H1 (cell line): ENCODE measurements at regions of chr17 and their contacts with region 1.

Region 1: GRCh38 chr17:51120739-51121617 is at the start of gene SPAG9:
- DNase-seq: peak; percentile 74 to 92
- H3K4me3 ChIP-seq: peak within 1 kb of the TSS; percentile 89 to 100 (median 96)
- H3K27ac ChIP-seq: peak within 1 kb of the TSS; percentile 98
- H3K4me1 ChIP-seq: peaks cover 0 to 5% (median 4%) of the 10 kb centered on the region in 4 experiments; a peak in 4 of 7 replicates
- H3K27me3 ChIP-seq: no peaks in the 10 kb centered on the region
- CTCF ChIP-seq: no peak
- EP300 ChIP-seq: no peak
- POLR2A ChIP-seq: peak; percentile 43 to 63; a peak in 2 of 3 replicates
- RAD21 ChIP-seq: no peak
- total RNA-seq, gene SPAG9: 46.0 and 63.8 TPM in 2 replicates

Region 2: DNA sequence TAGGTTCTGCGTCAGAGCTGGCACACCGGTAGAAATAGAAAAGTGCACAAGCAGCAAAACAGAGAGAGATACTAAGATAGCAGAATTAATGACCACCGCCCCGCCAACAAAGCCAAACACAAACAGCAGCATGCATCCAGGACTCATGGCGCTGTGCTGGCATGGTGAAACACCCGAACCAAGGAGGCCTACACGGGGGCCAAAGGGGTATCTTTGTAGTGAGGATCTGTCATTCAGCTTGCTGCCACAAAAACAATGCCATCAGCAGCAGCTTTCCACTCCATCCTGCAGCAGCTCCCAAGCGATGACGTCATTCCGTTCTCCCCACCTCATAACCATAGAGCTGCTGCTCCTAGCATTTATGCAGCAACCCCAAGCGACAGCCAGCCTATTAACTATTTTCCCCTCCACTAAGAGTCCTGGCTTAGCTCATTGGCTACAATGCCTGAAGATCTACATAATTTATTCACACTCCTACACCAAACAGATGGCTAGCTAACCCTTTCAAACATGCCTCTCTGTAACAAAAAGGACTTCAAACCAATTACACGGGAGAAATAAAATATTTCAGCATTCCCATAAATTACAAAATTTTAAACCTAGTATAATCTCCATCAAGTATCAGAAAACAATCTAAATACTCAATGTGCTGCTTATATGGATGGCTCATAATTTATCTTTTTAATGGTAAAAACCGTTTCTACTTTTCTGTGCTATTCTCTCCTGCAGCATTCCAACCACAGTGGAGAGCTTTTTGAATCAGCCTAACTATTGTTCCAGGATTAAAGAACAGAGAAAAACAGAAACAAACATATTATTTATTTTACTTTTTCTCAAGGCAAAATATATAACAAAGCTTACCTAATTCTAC is 74.2 kb before region 1 on chr17:
- CTCF ChIA-PET with region 1: no interaction called
- POLR2A ChIA-PET with region 1: interaction called, 13 read pairs
- DNase-seq: peak; percentile 53 to 75
- H3K4me3 ChIP-seq: peak overlapping the region; percentile 32 to 61 (median 38); a peak in 7 of 8 replicates
- H3K27ac ChIP-seq: peak overlapping the region; percentile 84
- H3K4me1 ChIP-seq: peaks cover 1 to 14% (median 5%) of the 10 kb centered on the region in 4 experiments; a peak in 5 of 7 replicates
- H3K27me3 ChIP-seq: no peaks in the 10 kb centered on the region
- CTCF ChIP-seq: no peak
- EP300 ChIP-seq: no peak
- POLR2A ChIP-seq: peak; percentile 80 to 82
- RAD21 ChIP-seq: no peak

Region 3: DNA sequence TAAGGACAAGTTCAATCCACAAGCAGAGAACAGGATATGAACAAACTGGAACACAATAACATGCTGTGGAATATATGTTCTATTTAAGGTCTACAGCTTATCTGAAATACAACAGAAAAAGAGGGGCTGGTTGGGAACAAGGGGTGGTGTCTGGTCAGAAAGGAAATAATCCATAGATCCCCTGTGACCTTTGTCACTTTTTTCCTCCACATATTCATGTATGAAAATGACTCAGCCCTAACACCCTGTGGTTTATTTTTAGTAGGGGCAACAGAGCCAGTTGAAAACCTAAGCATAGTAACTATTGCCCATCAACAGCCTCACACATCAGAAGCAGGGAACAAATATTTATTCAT is 12.0 kb after region 1 on chr17:
- CTCF ChIA-PET with region 1: interaction called, 3 read pairs
- POLR2A ChIA-PET with region 1: interaction called, 10 read pairs
- DNase-seq: no peak
- H3K4me3 ChIP-seq: no peak overlapping the region
- H3K27ac ChIP-seq: no peak overlapping the region
- H3K4me1 ChIP-seq: no peaks in the 10 kb centered on the region
- H3K27me3 ChIP-seq: no peaks in the 10 kb centered on the region
- CTCF ChIP-seq: no peak
- EP300 ChIP-seq: no peak
- POLR2A ChIP-seq: no peak
- RAD21 ChIP-seq: no peak

Region 4: GRCh38 chr17:51153210-51154072 is 32.5 kb after region 1 on chr17 and contains the start of gene NME1:
- CTCF ChIA-PET with region 1: interaction called, 6 read pairs
- POLR2A ChIA-PET with region 1: interaction called, 17 read pairs
- DNase-seq: peak; percentile 97 to 99
- H3K4me3 ChIP-seq: peak within 1 kb of the TSS; percentile 71 to 91 (median 80)
- H3K27ac ChIP-seq: peak within 1 kb of the TSS; percentile 72
- H3K4me1 ChIP-seq: peaks cover 0 to 2% (median 0%) of the 10 kb centered on the region in 4 experiments; a peak in 3 of 7 replicates
- H3K27me3 ChIP-seq: no peaks in the 10 kb centered on the region
- CTCF ChIP-seq: peak; percentile 72 to 87 (median 77)
- EP300 ChIP-seq: peak; percentile 47 to 85; a peak in 2 of 3 replicates
- POLR2A ChIP-seq: peak; percentile 84 to 88
- RAD21 ChIP-seq: peak; percentile 85 to 87
- total RNA-seq, gene NME1: 307 and 310 TPM in 2 replicates

Region 5: GRCh38 chr17:51540151-51540550 is 419.2 kb after region 1 on chr17:
- CTCF ChIA-PET with region 1: no interaction called
- POLR2A ChIA-PET with region 1: no interaction called
- DNase-seq: no peak
- H3K4me3 ChIP-seq: no peak overlapping the region
- H3K27ac ChIP-seq: no peak overlapping the region
- H3K4me1 ChIP-seq: peaks cover 0 to 4% (median 0%) of the 10 kb centered on the region in 4 experiments; a peak in 1 of 7 replicates
- H3K27me3 ChIP-seq: no peaks in the 10 kb centered on the region
- CTCF ChIP-seq: peak in 1 of 3 experiments; percentile 15; a peak in 1 of 4 replicates
- EP300 ChIP-seq: no peak
- POLR2A ChIP-seq: no peak
- RAD21 ChIP-seq: peak; percentile 39 to 50